ENCODE measurements at regions of chr20 and their contacts with region 1.

Region 1: DNA sequence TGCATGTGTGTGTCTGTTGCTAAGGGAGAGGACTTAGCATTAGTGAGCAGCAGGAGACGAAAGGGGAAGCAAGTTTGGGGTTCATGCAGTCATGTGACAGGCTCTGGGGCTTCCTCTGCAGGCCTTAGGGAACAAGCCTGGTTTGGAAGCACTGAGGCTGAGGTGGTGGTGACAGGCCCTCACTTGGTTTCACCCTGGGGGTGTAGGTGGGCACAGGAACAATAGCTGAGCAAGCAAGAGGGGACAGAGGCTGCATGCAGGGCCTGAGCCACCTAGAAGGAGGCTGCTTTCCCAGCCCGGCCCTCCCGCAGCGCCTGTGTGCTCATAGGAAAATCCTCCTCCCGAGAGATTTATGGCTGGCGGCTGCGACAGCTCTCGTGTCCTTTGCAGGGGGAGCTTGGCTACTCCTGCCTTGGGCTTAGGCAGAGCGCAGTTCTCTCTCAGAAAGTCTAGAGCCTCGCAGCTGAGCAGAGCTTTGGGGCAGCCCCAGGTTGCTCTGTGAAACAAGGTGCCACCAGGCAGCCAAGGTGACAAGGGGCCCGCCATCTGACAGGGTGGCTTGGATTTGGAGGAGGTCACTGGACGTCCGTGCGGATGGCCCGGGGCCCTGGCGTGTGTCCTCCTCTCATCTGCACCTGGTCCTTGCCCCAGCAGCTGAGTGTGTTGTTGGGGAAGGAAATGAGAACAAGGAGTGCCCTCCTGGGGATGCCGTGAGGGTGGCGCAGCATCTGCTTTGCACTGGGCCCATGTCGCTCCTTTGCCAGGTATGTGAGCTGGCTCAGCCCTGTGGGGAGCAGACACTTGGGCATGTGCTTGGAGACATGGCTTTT is 41.6 kb downstream of the EDN3 start:
- DNase-seq: no peak
- ATAC-seq: no peak
- H3K4me3 Mint-ChIP-seq: no peak overlapping the region
- H3K27ac Mint-ChIP-seq: no peak overlapping the region
- H3K4me1 Mint-ChIP-seq: no peaks in the 10 kb centered on the region
- H3K27me3 Mint-ChIP-seq: no peaks in the 10 kb centered on the region

Region 2: DNA sequence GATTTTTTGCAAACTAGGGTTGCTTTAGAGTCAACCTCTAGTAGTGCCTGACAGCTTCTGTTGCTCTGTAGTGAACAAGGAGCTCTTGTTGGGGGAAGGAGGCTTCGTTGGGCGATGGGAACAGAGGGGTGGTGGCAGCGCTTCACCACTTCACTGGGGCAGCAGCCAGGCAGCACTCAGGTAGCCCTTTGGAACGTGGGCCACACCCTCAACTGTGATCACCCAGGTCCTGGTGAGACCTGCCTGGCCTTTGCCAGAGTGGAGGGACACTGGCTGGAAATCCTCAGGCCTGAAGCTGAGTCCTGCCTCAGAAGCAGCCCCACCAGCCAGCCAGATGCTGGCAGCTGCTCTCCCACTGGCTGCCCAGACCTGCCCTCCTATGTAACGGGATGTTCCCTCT is 52.0 kb before region 1 on chr20:
- CTCF ChIA-PET with region 1: no interaction called
- POLR2A ChIA-PET with region 1: no interaction called
- intact Hi-C with region 1: loop called in 1 of 2 experiments (anchors 10 kb)
- DNase-seq: no peak
- ATAC-seq: no peak
- H3K4me3 Mint-ChIP-seq: no peak overlapping the region
- H3K27ac Mint-ChIP-seq: no peak overlapping the region
- H3K4me1 Mint-ChIP-seq: no peaks in the 10 kb centered on the region
- H3K27me3 Mint-ChIP-seq: no peaks in the 10 kb centered on the region